Breast epithelium (tissue), 4 donors: ENCODE measurements at regions of chr5 and their contacts with region 1.

Region 1: GRCh38 chr5:172463031-172463430 is 8.7 kb upstream of the SH3PXD2B start:
- DNase-seq: no peak
- H3K4me3 ChIP-seq: no peak overlapping the region
- H3K27ac ChIP-seq: no peak overlapping the region
- H3K4me1 ChIP-seq: no peaks in the 10 kb centered on the region
- H3K27me3 ChIP-seq: no peaks in the 10 kb centered on the region
- CTCF ChIP-seq: no peak
- POLR2A ChIP-seq: no peak

Region 2: GRCh38 chr5:172414531-172415361 is 48.3 kb before region 1 on chr5:
- intact Hi-C with region 1: loop called (anchors 1 kb)
- DNase-seq: no peak
- H3K4me3 ChIP-seq: no peak overlapping the region
- H3K27ac ChIP-seq: peak overlapping the region; percentile 81 to 85
- H3K4me1 ChIP-seq: peaks cover 14 to 43% of the 10 kb centered on the region in 2 donors
- H3K27me3 ChIP-seq: no peaks in the 10 kb centered on the region
- CTCF ChIP-seq: no peak
- POLR2A ChIP-seq: no peak

Region 3: GRCh38 chr5:172943283-172943841 is 480.3 kb after region 1 on chr5:
- intact Hi-C with region 1: loop called (anchors 10 kb)
- DNase-seq: no peak
- H3K4me3 ChIP-seq: no peak overlapping the region
- H3K27ac ChIP-seq: no peak overlapping the region
- H3K4me1 ChIP-seq: no peaks in the 10 kb centered on the region
- H3K27me3 ChIP-seq: no peaks in the 10 kb centered on the region
- CTCF ChIP-seq: no peak
- POLR2A ChIP-seq: no peak